ENCODE measurements at regions of chr14 and their contacts with region 1.

Region 1: GRCh38 chr14:70821584-70822529 is 12.5 kb upstream of the MAP3K9 start:
- DNase-seq: peak; percentile 82
- H3K4me3 Mint-ChIP-seq: peak overlapping the region; percentile 79
- H3K27ac Mint-ChIP-seq: peak overlapping the region; percentile 53
- H3K4me1 Mint-ChIP-seq: peaks cover 20% of the 10 kb centered on the region
- H3K27me3 Mint-ChIP-seq: peaks cover 24% of the 10 kb centered on the region

Region 2: GRCh38 chr14:70086685-70087379 is 735.0 kb before region 1 on chr14:
- CTCF ChIA-PET with region 1: no interaction called
- intact Hi-C with region 1: loop called (anchors 1 kb)
- DNase-seq: peak; percentile 37
- H3K4me3 Mint-ChIP-seq: no peak overlapping the region
- H3K27ac Mint-ChIP-seq: no peak overlapping the region
- H3K4me1 Mint-ChIP-seq: no peaks in the 10 kb centered on the region
- H3K27me3 Mint-ChIP-seq: peaks cover 24% of the 10 kb centered on the region

Region 3: GRCh38 chr14:70714055-70714621 is 107.7 kb before region 1 on chr14:
- CTCF ChIA-PET with region 1: interaction called, 7 read pairs
- intact Hi-C with region 1: loop called (anchors 1 kb)
- DNase-seq: peak; percentile 71
- H3K4me3 Mint-ChIP-seq: no peak overlapping the region
- H3K27ac Mint-ChIP-seq: no peak overlapping the region
- H3K4me1 Mint-ChIP-seq: peaks cover 2% of the 10 kb centered on the region
- H3K27me3 Mint-ChIP-seq: no peaks in the 10 kb centered on the region

Region 4: DNA sequence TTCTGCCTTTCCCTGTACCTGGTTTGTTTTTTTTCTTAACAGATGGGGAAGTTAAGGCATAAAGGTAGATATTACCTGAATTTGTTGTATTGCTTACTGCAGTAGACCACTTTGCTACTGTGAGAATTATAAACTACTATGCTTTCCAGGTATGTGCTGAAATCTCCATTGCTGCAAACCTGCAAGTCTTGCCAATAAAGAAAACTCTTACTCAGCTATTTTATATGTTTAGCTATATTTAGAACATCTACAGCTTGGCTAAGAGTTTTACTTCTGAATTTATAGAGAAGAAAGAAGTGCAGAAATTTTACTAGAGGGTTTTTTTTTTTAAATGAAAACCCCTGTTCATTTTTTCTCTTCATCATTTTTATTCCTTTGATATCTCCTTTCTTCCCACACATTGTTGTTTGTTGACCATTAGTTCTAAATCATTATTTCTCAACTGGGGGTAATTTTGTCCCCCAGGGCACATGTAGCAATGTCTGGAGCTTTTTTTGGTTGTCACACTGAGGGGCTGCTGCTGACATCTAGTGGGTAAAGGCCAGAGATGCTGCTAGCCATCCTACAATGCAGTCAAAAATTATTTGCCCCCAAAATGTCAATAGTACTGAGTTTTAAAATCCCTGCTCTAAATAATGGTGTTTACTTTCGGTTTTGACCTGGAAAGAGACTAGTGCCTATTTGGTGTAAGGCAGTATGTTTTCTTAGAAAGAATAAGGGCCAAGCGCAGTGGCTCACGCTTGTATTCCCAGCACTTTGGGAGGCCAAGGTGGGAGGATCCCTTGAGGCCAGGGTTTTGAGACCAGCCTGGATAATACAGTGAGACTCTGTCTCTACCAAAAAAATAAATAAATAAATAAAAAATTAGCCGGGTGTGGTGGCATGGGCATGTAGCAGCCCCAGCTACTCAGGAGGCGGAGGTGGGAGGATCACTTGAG is 134.0 kb after region 1 on chr14:
- CTCF ChIA-PET with region 1: interaction called, 54 read pairs
- intact Hi-C with region 1: loop called (anchors 1 kb)
- DNase-seq: peak; percentile 58
- H3K4me3 Mint-ChIP-seq: no peak overlapping the region
- H3K27ac Mint-ChIP-seq: no peak overlapping the region
- H3K4me1 Mint-ChIP-seq: peaks cover 33% of the 10 kb centered on the region
- H3K27me3 Mint-ChIP-seq: no peaks in the 10 kb centered on the region

Region 5: GRCh38 chr14:71117839-71118743 is 296.2 kb after region 1 on chr14:
- CTCF ChIA-PET with region 1: no interaction called
- intact Hi-C with region 1: no loop called
- DNase-seq: no peak
- H3K4me3 Mint-ChIP-seq: no peak overlapping the region
- H3K27ac Mint-ChIP-seq: peak overlapping the region; percentile 50
- H3K4me1 Mint-ChIP-seq: peaks cover 17% of the 10 kb centered on the region
- H3K27me3 Mint-ChIP-seq: no peaks in the 10 kb centered on the region